ENCODE measurements at regions of chr7 and their contacts with region 1.

Region 1: GRCh38 chr7:22660732-22661131 is 66.3 kb upstream of the IL6 start:
- DNase-seq: no peak
- H3K4me3 Mint-ChIP-seq: no peak overlapping the region
- H3K27ac Mint-ChIP-seq: no peak overlapping the region
- H3K4me1 Mint-ChIP-seq: peaks cover 26% of the 10 kb centered on the region
- H3K27me3 Mint-ChIP-seq: peaks cover 15% of the 10 kb centered on the region

Region 2: GRCh38 chr7:22627136-22627535 is 33.6 kb before region 1 on chr7:
- CTCF ChIA-PET with region 1: no interaction called
- POLR2A ChIA-PET with region 1: no interaction called
- intact Hi-C with region 1: no loop called
- DNase-seq: no peak
- H3K4me3 Mint-ChIP-seq: no peak overlapping the region
- H3K27ac Mint-ChIP-seq: no peak overlapping the region
- H3K4me1 Mint-ChIP-seq: no peaks in the 10 kb centered on the region
- H3K27me3 Mint-ChIP-seq: peaks cover 18% of the 10 kb centered on the region

Region 3: DNA sequence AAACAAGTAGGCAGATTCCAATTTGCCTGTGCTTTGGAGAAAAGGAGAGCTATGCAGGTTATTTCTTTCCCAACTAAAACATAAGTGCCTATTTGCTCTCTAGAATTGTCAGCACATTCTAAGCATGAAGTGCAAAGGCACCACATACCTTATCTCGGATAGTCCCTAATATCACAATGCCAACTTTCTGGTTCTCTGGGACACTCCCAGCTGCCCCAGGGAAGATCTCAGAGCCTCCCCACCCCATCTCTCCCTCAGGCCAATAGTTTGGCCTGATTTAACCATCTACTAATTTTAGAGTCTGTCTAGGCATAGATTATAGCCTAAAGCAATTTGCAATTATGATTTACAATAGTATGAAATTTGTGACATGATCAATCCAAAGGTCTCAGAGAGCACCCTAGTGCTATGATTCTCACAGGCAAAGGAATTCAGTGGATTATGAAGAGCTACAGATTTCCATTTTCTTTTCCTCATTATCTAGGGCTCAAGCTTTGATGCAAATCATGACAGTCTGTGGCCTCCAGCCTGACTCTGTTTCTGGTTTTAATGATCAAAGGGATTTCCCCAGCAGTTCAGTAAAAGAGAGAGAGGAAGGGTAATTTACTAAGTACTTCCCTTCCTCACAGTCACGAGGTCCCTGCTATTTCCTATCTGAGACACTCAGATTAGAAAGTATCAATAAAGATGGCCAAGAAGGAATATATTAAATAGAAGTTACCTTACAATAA is 37.3 kb after region 1 on chr7:
- CTCF ChIA-PET with region 1: interaction called, 4 read pairs
- POLR2A ChIA-PET with region 1: interaction called, 5 read pairs
- intact Hi-C with region 1: loop called (anchors 1 kb)
- DNase-seq: peak; percentile 36
- H3K4me3 Mint-ChIP-seq: peak overlapping the region; percentile 13
- H3K27ac Mint-ChIP-seq: peak overlapping the region; percentile 85
- H3K4me1 Mint-ChIP-seq: peaks cover 66% of the 10 kb centered on the region
- H3K27me3 Mint-ChIP-seq: peaks cover 2% of the 10 kb centered on the region

Measured in activated CD4-positive, alpha-beta memory T cell treated with anti-CD3 and anti-CD28 coated beads for 36 hours (primary cell).